Dendritic cell treated with granulocyte-macrophage colony-stimulating factor and Interleukin-4, amounts not matched to agents 40 ng/mL and 50 ng/mL, for 4 days (primary cell): ENCODE measurements at regions of chr7 and their contacts with region 1.

Region 1: DNA sequence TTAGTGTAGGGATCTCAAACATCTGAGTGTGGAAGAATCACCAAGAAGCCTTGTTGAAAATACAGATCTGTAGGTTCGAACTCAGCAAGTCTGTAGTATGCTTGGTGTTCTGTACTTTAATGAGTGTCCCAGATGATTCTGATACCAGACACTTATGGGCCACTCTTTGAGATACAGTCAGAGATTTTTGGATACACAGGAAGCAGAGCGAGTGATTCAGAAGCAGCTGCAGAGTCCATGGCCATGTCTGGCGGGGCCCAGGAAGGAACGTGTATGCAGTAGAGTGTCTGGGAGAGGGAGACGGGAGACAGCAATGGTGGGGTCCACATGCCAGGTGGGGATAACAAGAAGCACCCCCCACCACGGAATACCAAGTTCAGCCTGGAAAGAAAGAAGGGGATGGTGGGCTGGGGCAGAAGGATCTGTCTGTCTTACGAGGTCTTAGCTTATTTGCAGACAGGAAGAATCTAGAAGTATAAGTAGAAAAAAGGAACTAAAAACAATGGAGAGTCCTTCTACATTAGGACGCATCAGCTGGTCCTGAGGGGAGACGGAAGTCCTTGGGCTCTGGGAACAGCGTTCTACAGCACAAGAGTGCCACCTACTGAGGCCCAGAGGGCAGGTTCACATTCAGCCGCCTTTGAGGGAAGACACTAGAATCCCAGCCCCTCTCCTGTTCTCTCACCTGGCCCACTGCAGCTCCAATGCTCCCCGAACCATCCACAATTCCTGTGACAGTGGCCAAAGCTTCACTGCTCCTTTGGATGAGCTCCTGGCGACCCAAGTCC is 55.4 kb downstream of the SLC37A3 start:
- H3K4me3 Mint-ChIP-seq: no peak overlapping the region
- H3K27ac Mint-ChIP-seq: peak overlapping the region; percentile 69
- H3K4me1 Mint-ChIP-seq: peaks cover 18% of the 10 kb centered on the region
- H3K27me3 Mint-ChIP-seq: no peaks in the 10 kb centered on the region

Region 2: GRCh38 chr7:139426258-139427028 is 916.5 kb before region 1 on chr7:
- intact Hi-C with region 1: loop called (anchors 10 kb)
- H3K4me3 Mint-ChIP-seq: no peak overlapping the region
- H3K27ac Mint-ChIP-seq: no peak overlapping the region
- H3K4me1 Mint-ChIP-seq: no peaks in the 10 kb centered on the region
- H3K27me3 Mint-ChIP-seq: no peaks in the 10 kb centered on the region